A549 (cell line): ENCODE measurements at regions of chr3 and their contacts with region 1.

Region 1: GRCh38 chr3:48151058-48151806 is 37.0 kb downstream of the CDC25A start:
- DNase-seq: peak; percentile 62 to 80
- ATAC-seq: peak; percentile 96 to 99
- H3K4me3 ChIP-seq: no peak overlapping the region
- H3K27ac ChIP-seq: peak overlapping the region in 1 of 2 experiments; percentile 37; a peak in 1 of 6 replicates
- H3K4me1 ChIP-seq: peaks cover 25% of the 10 kb centered on the region
- CTCF ChIP-seq: peak; percentile 70
- EP300 ChIP-seq: no peak
- POLR2A ChIP-seq: no peak
- RAD21 ChIP-seq: peak; percentile 87 to 94

Region 2: GRCh38 chr3:47824541-47825473 is 326.4 kb before region 1 on chr3:
- CTCF ChIA-PET with region 1: interaction called, 12 read pairs
- POLR2A ChIA-PET with region 1: no interaction called
- DNase-seq: peak; percentile 81 to 89
- ATAC-seq: peak; percentile 100
- H3K4me3 ChIP-seq: peak overlapping the region; percentile 78
- H3K27ac ChIP-seq: peak overlapping the region; percentile 87 to 92
- H3K4me1 ChIP-seq: peaks cover 12% of the 10 kb centered on the region; the same call in 2 of the 3 replicates
- CTCF ChIP-seq: peak; percentile 75
- EP300 ChIP-seq: no peak
- POLR2A ChIP-seq: peak; percentile 54
- RAD21 ChIP-seq: no peak; a peak in 1 of 5 replicates

Region 3: GRCh38 chr3:47836986-47837385 is 314.2 kb before region 1 on chr3:
- CTCF ChIA-PET with region 1: interaction called, 22 read pairs
- POLR2A ChIA-PET with region 1: interaction called, 3 read pairs
- DNase-seq: no peak
- ATAC-seq: peak in 1 of 2 experiments; percentile 26; a peak in 3 of 6 replicates
- H3K4me3 ChIP-seq: no peak overlapping the region
- H3K27ac ChIP-seq: no peak overlapping the region
- H3K4me1 ChIP-seq: no peaks in the 10 kb centered on the region
- CTCF ChIP-seq: no peak
- EP300 ChIP-seq: no peak
- POLR2A ChIP-seq: no peak
- RAD21 ChIP-seq: no peak

Region 4: DNA sequence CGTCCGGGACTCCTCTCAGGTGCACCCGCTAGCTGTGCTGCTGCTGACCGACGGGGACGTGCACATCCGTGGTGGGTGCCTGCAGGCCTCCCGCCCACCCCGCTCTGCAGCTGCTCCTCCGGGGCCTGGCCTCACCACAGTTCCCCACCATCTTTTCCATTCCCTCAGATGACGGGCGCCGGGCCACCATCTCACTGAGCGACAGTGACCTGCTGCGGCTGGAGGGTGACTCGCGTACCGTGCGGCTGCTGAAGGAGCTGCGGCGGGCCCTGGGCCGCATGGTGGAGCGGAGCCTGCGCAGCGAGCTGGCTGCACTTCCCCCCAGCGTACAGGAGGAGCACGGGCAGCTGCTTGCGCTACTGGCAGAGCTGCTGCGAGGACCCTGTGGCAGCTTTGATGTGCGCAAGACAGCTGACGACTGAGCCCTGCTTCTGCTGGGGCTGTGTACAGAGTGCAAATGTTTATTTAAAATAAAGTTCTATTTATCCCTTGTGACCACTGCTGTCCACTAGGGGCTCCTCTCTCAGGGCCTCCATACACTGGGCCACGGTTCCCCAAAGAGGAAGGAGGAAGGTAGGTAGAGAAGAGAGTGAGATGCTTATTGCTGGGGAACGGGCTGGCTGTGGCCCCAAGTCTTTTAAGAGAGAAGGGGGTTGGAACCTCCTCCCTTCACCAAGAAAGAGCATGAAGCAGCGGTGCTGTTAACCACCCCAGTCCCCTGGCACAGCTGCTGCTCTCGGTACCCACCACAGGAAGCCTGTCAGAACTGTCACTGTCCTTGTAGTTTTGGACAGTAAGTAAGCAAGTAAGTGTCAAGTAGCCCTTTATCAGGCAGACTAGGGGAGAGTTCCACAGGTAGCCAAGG is 301.3 kb before region 1 on chr3:
- CTCF ChIA-PET with region 1: interaction called, 12 read pairs
- POLR2A ChIA-PET with region 1: no interaction called
- DNase-seq: peak in 1 of 2 experiments; percentile 44
- ATAC-seq: peak; percentile 60 to 73
- H3K4me3 ChIP-seq: no peak overlapping the region
- H3K27ac ChIP-seq: no peak overlapping the region
- H3K4me1 ChIP-seq: no peaks in the 10 kb centered on the region
- CTCF ChIP-seq: peak; percentile 33; the same call in 2 of the 3 replicates
- EP300 ChIP-seq: no peak
- POLR2A ChIP-seq: no peak
- RAD21 ChIP-seq: peak in 1 of 2 experiments; percentile 25; a peak in 1 of 5 replicates

Region 5: GRCh38 chr3:48039487-48040190 is 111.6 kb before region 1 on chr3:
- CTCF ChIA-PET with region 1: interaction called, 12 read pairs
- POLR2A ChIA-PET with region 1: no interaction called
- DNase-seq: peak; percentile 9 to 48
- ATAC-seq: peak; percentile 62 to 84; a peak in 5 of 6 replicates
- H3K4me3 ChIP-seq: no peak overlapping the region
- H3K27ac ChIP-seq: peak overlapping the region; percentile 10 to 76; a peak in 5 of 6 replicates
- H3K4me1 ChIP-seq: peaks cover 27% of the 10 kb centered on the region
- CTCF ChIP-seq: no peak
- EP300 ChIP-seq: no peak
- POLR2A ChIP-seq: no peak
- RAD21 ChIP-seq: no peak

Region 6: DNA sequence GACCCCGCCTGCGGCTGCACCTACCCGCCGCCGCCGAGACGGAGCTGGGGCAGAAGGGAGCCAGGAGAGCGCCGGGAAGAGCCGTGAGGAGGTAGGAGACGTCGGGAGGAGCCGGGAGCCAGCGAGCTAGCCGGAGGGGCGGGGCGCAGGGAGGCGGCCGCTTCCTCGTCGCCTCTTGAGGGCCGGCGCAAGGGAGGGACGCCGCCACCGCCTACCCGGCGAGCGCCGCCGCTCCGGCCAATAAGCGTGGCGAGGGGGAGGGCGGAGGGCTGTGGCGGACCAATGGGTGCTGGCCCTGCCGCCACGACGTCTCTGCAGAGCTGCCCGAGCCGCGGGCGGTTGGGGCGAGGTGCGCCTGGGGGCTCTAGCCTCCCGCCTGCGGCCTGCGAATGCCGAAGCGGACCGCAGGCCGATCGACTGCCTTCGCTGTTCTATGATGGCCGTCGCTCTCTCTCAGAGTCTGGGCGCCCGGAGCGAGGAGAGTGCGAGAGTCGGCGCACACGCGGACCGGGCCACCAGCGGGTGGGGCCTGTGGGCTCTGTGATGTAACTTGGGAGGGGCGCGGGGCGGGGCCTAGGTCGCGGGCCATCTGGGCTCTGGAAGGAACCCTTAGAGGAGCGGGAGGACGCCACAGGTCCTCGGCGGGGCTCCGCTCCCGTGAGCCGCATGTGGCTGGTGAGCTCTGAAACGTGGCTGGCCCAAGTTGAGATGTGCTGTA is 62.3 kb before region 1 on chr3:
- CTCF ChIA-PET with region 1: interaction called, 13 read pairs
- POLR2A ChIA-PET with region 1: interaction called, 11 read pairs
- DNase-seq: peak; percentile 73 to 96
- ATAC-seq: peak; percentile 89 to 95
- H3K4me3 ChIP-seq: peak overlapping the region; percentile 99
- H3K27ac ChIP-seq: peak overlapping the region; percentile 98 to 100
- H3K4me1 ChIP-seq: peaks cover 39% of the 10 kb centered on the region
- CTCF ChIP-seq: no peak
- EP300 ChIP-seq: no peak
- POLR2A ChIP-seq: peak; percentile 90
- RAD21 ChIP-seq: no peak

Region 7: GRCh38 chr3:48190911-48191310 is 39.7 kb after region 1 on chr3:
- CTCF ChIA-PET with region 1: no interaction called
- POLR2A ChIA-PET with region 1: no interaction called
- DNase-seq: no peak
- ATAC-seq: no peak
- H3K4me3 ChIP-seq: no peak overlapping the region
- H3K27ac ChIP-seq: no peak overlapping the region
- H3K4me1 ChIP-seq: peaks cover 11% of the 10 kb centered on the region
- CTCF ChIP-seq: no peak
- EP300 ChIP-seq: no peak
- POLR2A ChIP-seq: no peak
- RAD21 ChIP-seq: no peak

Region 8: DNA sequence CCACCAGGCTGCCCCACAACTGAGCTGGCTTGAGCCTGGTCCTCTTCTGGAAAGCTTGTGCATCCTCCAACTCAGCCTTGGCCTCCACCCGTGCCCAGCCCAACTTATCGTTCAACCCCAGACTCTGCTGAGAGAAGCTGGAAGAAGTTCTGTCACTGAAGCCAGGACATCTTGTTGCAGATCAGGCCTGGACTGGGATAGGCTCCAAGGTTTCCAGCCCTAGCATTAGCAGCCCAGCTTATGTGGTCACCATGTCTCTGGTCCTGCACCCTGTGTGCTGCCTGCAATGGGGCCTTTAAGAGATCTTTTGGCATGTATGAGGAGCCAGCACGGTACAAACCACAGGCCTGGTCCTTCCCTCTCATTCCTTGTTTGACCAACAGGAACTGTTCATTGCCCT is 56.8 kb after region 1 on chr3:
- CTCF ChIA-PET with region 1: no interaction called
- POLR2A ChIA-PET with region 1: no interaction called
- DNase-seq: no peak
- ATAC-seq: no peak
- H3K4me3 ChIP-seq: no peak overlapping the region
- H3K27ac ChIP-seq: no peak overlapping the region
- H3K4me1 ChIP-seq: no peaks in the 10 kb centered on the region
- CTCF ChIP-seq: no peak
- EP300 ChIP-seq: no peak
- POLR2A ChIP-seq: no peak
- RAD21 ChIP-seq: no peak